OCI-LY7 (cell line): ENCODE measurements at regions of chr6 and their contacts with region 1.

Region 1: DNA sequence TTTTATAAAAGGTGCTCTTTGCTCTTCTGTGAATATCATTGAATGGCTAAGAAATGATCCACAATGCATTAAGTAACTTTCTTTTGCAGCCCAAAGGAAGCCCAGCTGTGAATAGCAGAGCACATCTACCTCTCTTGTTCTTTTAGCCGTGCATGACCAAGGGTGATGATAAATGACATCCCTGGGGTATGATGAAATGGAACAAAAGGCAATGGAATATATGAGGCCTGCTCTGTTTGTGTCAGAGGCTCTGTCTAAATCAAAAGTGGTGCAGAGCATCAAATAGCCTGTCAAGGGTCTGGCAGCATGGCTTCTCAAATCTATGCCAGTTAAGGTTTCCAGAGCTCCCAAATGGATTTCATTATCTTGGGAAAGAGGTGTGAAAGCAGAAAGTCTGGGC is 362.6 kb upstream of the RNF217 start:
- DNase-seq: no peak
- H3K4me3 ChIP-seq: no peak overlapping the region
- H3K27ac ChIP-seq: no peak overlapping the region
- H3K4me1 ChIP-seq: no peaks in the 10 kb centered on the region
- CTCF ChIP-seq: no peak

Region 2: GRCh38 chr6:124535751-124536150 is 63.9 kb before region 1 on chr6:
- CTCF ChIA-PET with region 1: no interaction called
- POLR2A ChIA-PET with region 1: no interaction called
- intact Hi-C with region 1: loop called (anchors 2 kb)
- DNase-seq: no peak
- H3K4me3 ChIP-seq: no peak overlapping the region
- H3K27ac ChIP-seq: no peak overlapping the region
- H3K4me1 ChIP-seq: no peaks in the 10 kb centered on the region
- CTCF ChIP-seq: no peak

Region 3: GRCh38 chr6:124714728-124715127 is 115.1 kb after region 1 on chr6:
- CTCF ChIA-PET with region 1: no interaction called
- POLR2A ChIA-PET with region 1: no interaction called
- intact Hi-C with region 1: no loop called
- DNase-seq: no peak
- H3K4me3 ChIP-seq: no peak overlapping the region
- H3K27ac ChIP-seq: no peak overlapping the region
- H3K4me1 ChIP-seq: no peaks in the 10 kb centered on the region
- CTCF ChIP-seq: no peak